ENCODE measurements at regions of chr16 and their contacts with region 1.

Region 1: DNA sequence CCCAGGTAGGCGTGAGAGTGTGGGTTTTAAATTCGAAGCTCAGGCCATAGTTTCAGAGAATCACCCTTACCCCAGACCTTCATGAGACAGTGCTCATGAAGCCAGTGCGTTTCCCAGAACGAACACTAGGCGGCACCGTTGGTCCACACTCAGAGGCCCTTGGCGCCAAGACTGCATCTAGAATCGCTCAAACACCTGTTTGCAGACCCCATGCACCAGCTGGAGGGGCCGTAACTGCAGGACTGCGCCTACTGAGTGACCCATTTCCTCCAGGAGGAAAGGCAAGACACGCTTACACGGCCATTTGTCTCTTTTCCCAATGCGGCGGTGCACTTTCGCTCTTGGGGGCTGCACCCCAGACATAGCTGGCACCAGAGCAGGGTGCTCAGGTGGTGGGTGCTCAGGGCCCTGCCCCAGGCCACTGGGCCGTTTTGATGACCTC is 34.0 kb downstream of the ADGRG5 start:
- DNase-seq: no peak
- H3K4me3 ChIP-seq: no peak overlapping the region
- CTCF ChIP-seq: peak; percentile 85

Region 2: DNA sequence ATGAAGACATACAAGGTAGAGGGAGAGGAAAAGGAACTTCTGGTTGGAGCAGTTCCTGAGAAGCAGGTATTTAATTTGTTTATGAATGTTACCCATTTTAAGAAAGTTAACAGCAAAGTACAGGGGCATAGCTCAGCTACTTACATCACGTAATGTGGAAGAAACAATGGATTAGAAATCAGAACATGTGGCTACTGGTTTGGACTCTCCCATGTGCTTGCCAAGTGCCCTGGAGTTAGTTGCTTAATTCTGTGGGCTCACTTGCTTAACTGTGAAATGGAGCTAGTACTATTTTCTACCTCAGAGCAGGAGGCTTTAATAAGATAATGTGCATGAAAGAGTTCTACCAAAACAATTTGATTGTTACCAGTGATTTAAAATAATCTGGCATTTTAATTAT is 363.0 kb before region 1 on chr16:
- CTCF ChIA-PET with region 1: no interaction called
- POLR2A ChIA-PET with region 1: no interaction called
- DNase-seq: no peak
- H3K4me3 ChIP-seq: no peak overlapping the region
- CTCF ChIP-seq: no peak

Region 3: GRCh38 chr16:57564571-57565270 is 11.7 kb before region 1 on chr16:
- CTCF ChIA-PET with region 1: interaction called, 22 read pairs
- POLR2A ChIA-PET with region 1: no interaction called
- DNase-seq: no peak
- H3K4me3 ChIP-seq: no peak overlapping the region
- CTCF ChIP-seq: no peak

Region 4: DNA sequence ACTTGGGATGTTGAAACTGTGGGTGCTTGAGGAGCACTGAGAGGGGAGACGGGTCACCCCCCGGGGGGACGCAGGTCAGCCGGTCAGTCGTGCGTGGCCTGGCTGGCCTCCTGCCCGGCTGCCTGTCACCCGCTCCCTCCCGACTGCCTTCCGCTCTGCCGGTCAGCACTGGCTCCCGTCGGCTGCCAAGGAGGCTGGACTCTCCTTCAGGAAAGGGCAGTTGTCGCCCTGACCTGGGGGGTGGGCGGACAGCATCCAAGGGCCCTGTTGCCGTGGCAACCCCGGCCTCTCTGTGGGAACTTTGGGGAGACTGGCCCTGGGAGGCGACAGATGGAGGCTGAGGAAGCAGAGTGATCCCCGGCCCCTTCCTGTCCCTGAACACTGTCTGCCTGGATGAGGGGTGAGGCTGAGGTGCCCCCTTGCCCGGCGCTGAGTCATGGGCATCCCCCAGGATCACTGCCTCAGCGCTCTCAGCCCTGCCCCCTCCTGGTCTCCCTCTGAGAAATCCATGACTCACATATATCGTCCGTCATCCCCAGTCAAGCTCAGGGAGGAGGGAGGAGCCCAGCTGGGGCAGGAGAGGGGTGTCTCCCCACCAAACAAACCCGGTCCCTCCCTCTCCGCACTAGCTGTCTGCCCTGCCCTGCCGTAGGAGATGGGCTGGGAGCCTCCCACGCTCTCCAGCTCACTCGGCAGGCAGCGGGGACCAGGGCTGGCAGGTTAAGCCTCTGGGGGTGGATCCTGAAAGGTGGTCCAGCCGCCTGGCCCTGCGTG is 51.7 kb after region 1 on chr16 and contains the start of gene ADGRG1:
- CTCF ChIA-PET with region 1: interaction called, 15 read pairs
- POLR2A ChIA-PET with region 1: no interaction called
- DNase-seq: peak; percentile 71
- H3K4me3 ChIP-seq: peak within 1 kb of the TSS; percentile 54
- CTCF ChIP-seq: peak; percentile 16

Region 5: GRCh38 chr16:57663917-57664661 is 87.6 kb after region 1 on chr16:
- CTCF ChIA-PET with region 1: interaction called, 10 read pairs
- POLR2A ChIA-PET with region 1: no interaction called
- DNase-seq: no peak
- H3K4me3 ChIP-seq: no peak overlapping the region
- CTCF ChIP-seq: peak; percentile 1

Region 6: DNA sequence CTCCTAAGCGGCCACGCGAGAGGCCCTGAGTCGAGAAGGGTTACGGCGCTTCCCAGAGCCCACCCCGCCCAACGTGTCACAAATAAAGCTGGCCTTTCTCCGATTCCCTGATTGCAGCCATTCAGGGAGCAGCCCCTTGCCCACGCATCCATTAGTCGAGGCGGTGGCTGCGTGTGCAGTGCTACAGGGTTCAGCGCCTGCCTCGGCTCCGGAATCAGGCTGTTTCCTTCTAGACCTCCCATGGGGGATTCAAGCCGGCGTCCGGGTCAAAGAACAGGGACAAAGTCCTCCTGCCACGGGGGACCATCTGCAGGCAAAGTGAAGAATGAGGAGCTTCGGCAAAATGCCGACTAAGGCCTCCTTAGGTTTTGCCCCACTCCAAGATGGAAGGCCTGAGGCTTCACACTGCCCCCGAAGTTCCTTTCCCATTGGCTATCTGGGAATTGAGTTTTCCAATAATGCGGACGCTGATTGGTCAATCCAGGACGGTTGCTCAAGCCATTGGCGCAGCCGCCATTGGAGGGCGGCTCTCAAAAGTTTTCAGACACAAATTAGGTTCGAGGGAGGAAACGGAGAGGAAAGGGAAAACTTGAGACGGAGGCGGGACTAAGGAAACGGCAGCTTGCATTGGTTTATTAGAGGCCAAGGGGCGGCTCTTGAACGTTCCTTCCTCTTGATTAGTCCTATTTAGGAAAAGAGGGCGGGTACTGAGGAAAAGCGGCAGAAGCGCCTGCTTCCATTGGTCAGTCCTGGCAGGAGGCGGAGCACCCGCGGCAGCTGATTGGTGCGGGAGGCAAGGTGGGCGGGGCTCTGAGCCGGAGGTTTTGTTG is 158.7 kb after region 1 on chr16:
- CTCF ChIA-PET with region 1: interaction called, 30 read pairs
- POLR2A ChIA-PET with region 1: no interaction called
- DNase-seq: peak; percentile 100
- H3K4me3 ChIP-seq: peak overlapping the region; percentile 96
- CTCF ChIP-seq: no peak

Region 7: GRCh38 chr16:57863434-57864160 is 287.1 kb after region 1 on chr16:
- CTCF ChIA-PET with region 1: interaction called, 10 read pairs
- POLR2A ChIA-PET with region 1: no interaction called
- DNase-seq: peak; percentile 44
- H3K4me3 ChIP-seq: no peak overlapping the region
- CTCF ChIP-seq: peak; percentile 68

Region 8: GRCh38 chr16:58077853-58078252 is 501.4 kb after region 1 on chr16:
- CTCF ChIA-PET with region 1: no interaction called
- POLR2A ChIA-PET with region 1: no interaction called
- DNase-seq: no peak
- H3K4me3 ChIP-seq: no peak overlapping the region
- CTCF ChIP-seq: no peak